ENCODE measurements at regions of chr18 and their contacts with region 1.

Region 1: DNA sequence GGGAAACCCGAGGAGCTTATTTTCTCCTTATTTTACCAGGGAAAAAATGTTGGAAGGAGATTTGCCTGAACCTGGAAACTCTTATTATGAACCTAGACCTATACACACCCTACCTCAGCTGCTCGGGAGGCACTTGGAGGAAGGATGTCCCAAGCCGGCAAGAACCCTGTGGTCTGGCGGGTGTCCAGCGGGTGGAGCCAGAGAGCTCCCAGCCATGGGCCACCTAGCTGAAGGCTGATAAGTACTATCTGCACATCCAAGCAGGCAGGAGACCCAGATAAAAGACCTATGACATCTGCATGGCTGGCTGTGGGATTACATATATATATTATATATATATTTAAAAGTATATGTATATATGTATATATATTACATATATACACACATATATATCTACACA is 1.1 kb upstream of the SLC14A1 start:
- DNase-seq: peak; percentile 57
- ATAC-seq: peak; percentile 100
- H3K4me3 ChIP-seq: no peak overlapping the region
- H3K27ac ChIP-seq: no peak overlapping the region
- H3K4me1 ChIP-seq: no peaks in the 10 kb centered on the region
- H3K27me3 ChIP-seq: 0 out of 2 replicates have a peak, but pooled peaks cover 6% of the 10 kb centered on the region
- CTCF ChIP-seq: peak; percentile 74 to 94 (median 78)
- POLR2A ChIP-seq: no peak
- RAD21 ChIP-seq: peak; percentile 82

Region 2: GRCh38 chr18:45571714-45572113 is 151.2 kb before region 1 on chr18:
- CTCF ChIA-PET with region 1: no interaction called
- POLR2A ChIA-PET with region 1: no interaction called
- RAD21 ChIA-PET with region 1: no interaction called
- intact Hi-C with region 1: no loop called
- DNase-seq: peak; percentile 7
- ATAC-seq: peak; percentile 85
- H3K4me3 ChIP-seq: no peak overlapping the region
- H3K27ac ChIP-seq: no peak overlapping the region
- H3K4me1 ChIP-seq: peaks cover 0 to 7% of the 10 kb centered on the region in 2 experiments; a peak in 2 of 4 replicates
- H3K27me3 ChIP-seq: no peaks in the 10 kb centered on the region
- CTCF ChIP-seq: peak in 2 of 3 experiments; percentile 54 to 64; a peak in 4 of 6 replicates
- POLR2A ChIP-seq: no peak
- RAD21 ChIP-seq: no peak

Region 3: GRCh38 chr18:45677276-45677807 is 45.6 kb before region 1 on chr18:
- CTCF ChIA-PET with region 1: no interaction called
- POLR2A ChIA-PET with region 1: no interaction called
- RAD21 ChIA-PET with region 1: no interaction called
- intact Hi-C with region 1: no loop called
- DNase-seq: no peak
- ATAC-seq: no peak
- H3K4me3 ChIP-seq: no peak overlapping the region
- H3K27ac ChIP-seq: no peak overlapping the region
- H3K4me1 ChIP-seq: no peaks in the 10 kb centered on the region
- H3K27me3 ChIP-seq: peaks cover 23% of the 10 kb centered on the region; the same call in 1 of the 2 replicates
- CTCF ChIP-seq: no peak
- POLR2A ChIP-seq: no peak
- RAD21 ChIP-seq: no peak

Region 4: GRCh38 chr18:45850021-45850420 is 127.1 kb after region 1 on chr18:
- CTCF ChIA-PET with region 1: interaction called, 11 read pairs
- POLR2A ChIA-PET with region 1: no interaction called
- RAD21 ChIA-PET with region 1: no interaction called
- intact Hi-C with region 1: loop called (anchors 2 kb)
- DNase-seq: no peak
- ATAC-seq: peak; percentile 87
- H3K4me3 ChIP-seq: no peak overlapping the region
- H3K27ac ChIP-seq: no peak overlapping the region
- H3K4me1 ChIP-seq: no peaks in the 10 kb centered on the region
- H3K27me3 ChIP-seq: no peaks in the 10 kb centered on the region
- CTCF ChIP-seq: peak; percentile 7 to 61 (median 57); a peak in 4 of 6 replicates
- POLR2A ChIP-seq: no peak
- RAD21 ChIP-seq: peak; percentile 37; the same call in 1 of the 2 replicates

Measured in HCT116 (cell line).